Mammary epithelial cell (primary cell): ENCODE measurements at regions of chr12 and their contacts with region 1.

Region 1: DNA sequence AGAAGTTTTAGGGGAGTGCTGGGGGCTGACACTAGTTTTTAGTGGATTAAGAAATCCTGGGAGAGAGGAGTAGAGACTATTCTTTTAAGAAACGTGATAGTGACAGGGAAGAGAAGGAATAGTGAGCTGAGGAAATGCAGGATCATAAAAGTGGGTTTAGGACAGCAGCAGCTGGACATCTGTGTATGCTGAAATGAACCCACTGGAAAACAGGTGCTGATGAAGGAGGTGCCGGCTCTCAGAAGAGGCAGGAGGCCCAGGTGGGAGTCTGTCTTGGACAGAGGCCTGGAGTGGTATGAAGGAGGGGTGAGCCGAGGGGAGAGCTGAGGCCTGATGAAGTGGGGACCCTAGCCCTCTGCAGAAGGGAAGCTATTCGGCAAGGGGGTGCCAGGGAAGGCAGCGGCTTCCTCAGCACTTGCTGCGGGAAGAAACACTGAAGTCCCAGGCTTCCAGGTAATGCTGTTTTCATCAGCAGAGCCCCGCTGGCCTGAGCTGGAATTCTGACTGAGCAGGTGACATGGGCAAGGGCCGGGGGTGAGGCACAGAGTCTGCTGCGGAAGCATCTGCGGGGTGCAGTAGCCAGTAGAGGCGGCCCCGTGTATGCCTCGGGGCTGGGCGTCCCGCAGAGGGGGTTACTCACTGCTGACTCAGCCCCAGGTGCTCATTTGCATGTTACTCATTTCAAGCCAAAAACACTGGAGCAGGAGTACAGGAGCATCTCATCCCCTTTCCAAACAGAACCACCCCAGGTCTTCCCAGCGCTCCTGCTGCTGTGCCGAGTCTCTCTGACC is 89.7 kb downstream of the TMCC3 start:
- DNase-seq: peak; percentile 98
- H3K4me3 ChIP-seq: peak overlapping the region in 2 of 3 experiments; percentile 20 to 35
- H3K27ac ChIP-seq: peak overlapping the region; percentile 95
- H3K4me1 ChIP-seq: peaks cover 34% of the 10 kb centered on the region
- H3K27me3 ChIP-seq: no peaks in the 10 kb centered on the region
- CTCF ChIP-seq: no peak

Region 2: GRCh38 chr12:94459728-94460615 is 100.7 kb before region 1 on chr12 and contains the start of gene CEP83:
- CTCF ChIA-PET with region 1: no interaction called
- dilution Hi-C with region 1: no loop called
- in situ Hi-C with region 1: no loop called
- intact Hi-C with region 1: no loop called
- DNase-seq: peak; percentile 93
- H3K4me3 ChIP-seq: peak within 1 kb of the TSS; percentile 72 to 95 (median 91)
- H3K27ac ChIP-seq: peak within 1 kb of the TSS; percentile 95
- H3K4me1 ChIP-seq: no peaks in the 10 kb centered on the region
- H3K27me3 ChIP-seq: no peaks in the 10 kb centered on the region
- CTCF ChIP-seq: no peak
- total RNA-seq, gene CEP83: 10.0 to 22.8 TPM

Region 3: DNA sequence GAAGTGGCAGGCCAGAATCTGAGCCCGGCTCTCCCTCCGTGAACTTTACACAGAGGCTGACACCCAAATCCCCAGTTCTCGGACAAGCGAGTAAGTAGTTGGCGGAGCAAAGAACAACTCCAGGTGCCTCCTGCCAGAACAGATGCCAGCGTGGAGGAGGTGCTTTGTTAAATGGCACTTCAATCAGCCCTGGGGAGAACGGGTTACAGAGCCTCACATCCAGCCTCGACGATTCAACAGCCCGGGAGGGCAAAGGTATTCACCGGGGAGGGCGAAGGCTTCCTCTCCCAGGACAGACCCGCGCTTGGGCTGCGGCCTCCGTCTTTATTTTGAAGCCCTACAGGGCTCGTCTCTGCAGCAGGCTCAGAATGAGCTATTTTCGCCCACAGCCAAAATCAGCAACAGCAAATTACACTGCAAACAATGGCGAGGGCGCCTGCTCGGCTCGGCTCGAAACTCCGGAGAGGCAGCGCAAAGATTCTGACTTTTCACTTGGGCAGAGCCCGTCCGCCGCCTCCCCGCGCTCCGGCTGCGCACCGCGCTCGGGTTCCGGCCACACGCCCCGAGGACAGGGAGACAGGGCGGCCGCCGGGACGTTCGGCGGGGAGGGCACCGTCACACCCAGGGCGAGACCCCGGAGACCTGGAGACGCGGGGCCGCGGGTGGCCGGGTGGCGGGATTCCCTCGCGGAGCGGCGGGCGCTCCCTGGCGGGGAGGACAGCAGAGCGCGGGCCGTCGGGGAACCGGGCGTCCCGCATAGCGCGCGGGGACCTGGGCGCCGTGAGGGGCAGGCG is 88.9 kb after region 1 on chr12:
- CTCF ChIA-PET with region 1: no interaction called
- dilution Hi-C with region 1: no loop called
- in situ Hi-C with region 1: no loop called
- intact Hi-C with region 1: loop called (anchors 2 kb)
- DNase-seq: peak; percentile 51
- H3K4me3 ChIP-seq: peak overlapping the region; percentile 73 to 92 (median 82)
- H3K27ac ChIP-seq: peak overlapping the region; percentile 63
- H3K4me1 ChIP-seq: peaks cover 27% of the 10 kb centered on the region
- H3K27me3 ChIP-seq: no peaks in the 10 kb centered on the region
- CTCF ChIP-seq: peak; percentile 19 to 53